Caco-2 (cell line): ENCODE measurements at regions of chr1 and their contacts with region 1.

Region 1: GRCh38 chr1:56986397-56986796 is 20.6 kb upstream of the C8B start:
- DNase-seq: no peak
- H3K4me3 ChIP-seq: no peak overlapping the region
- H3K4me3 Mint-ChIP-seq: no peak overlapping the region
- H3K27ac Mint-ChIP-seq: peak overlapping the region; percentile 67
- H3K4me1 ChIP-seq: peaks cover 25% of the 10 kb centered on the region
- H3K4me1 Mint-ChIP-seq: peaks cover 20% of the 10 kb centered on the region
- H3K27me3 ChIP-seq: no peaks in the 10 kb centered on the region
- H3K27me3 Mint-ChIP-seq: no peaks in the 10 kb centered on the region
- CTCF ChIP-seq: no peak

Region 2: DNA sequence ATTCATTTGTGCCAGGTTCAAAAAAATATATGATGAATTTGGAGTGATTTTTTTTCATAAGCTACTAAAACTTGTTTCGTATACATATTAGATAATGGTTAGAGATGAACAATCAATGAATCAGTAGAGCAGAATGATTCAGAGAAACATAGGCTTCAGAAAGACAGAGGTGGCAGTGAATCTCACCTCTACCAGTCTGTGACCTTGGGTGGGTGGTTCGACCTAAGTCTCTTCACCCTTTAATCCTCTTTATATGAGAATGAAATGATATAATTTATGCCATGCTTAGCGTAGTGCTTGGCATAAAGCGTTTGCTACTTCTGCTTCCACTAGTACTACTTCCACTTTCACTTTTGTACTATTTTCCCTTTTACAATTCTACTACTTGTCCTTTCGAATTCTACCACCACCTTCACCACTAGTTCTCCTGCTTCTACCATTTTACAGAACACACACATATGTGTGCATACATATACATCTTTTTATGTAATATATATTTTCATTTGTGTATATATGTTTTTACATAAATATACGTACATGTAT is 212.3 kb before region 1 on chr1:
- CTCF ChIA-PET with region 1: no interaction called
- POLR2A ChIA-PET with region 1: no interaction called
- intact Hi-C with region 1: no loop called
- DNase-seq: no peak
- H3K4me3 ChIP-seq: no peak overlapping the region
- H3K4me3 Mint-ChIP-seq: no peak overlapping the region
- H3K27ac Mint-ChIP-seq: no peak overlapping the region
- H3K4me1 ChIP-seq: no peaks in the 10 kb centered on the region
- H3K4me1 Mint-ChIP-seq: no peaks in the 10 kb centered on the region
- H3K27me3 ChIP-seq: no peaks in the 10 kb centered on the region
- H3K27me3 Mint-ChIP-seq: no peaks in the 10 kb centered on the region
- CTCF ChIP-seq: no peak

Region 3: GRCh38 chr1:57067863-57068262 is 81.5 kb after region 1 on chr1:
- CTCF ChIA-PET with region 1: no interaction called
- POLR2A ChIA-PET with region 1: interaction called, 3 read pairs
- intact Hi-C with region 1: loop called (anchors 1 kb)
- DNase-seq: no peak
- H3K4me3 ChIP-seq: no peak overlapping the region
- H3K4me3 Mint-ChIP-seq: no peak overlapping the region
- H3K27ac Mint-ChIP-seq: no peak overlapping the region
- H3K4me1 ChIP-seq: peaks cover 16% of the 10 kb centered on the region
- H3K4me1 Mint-ChIP-seq: no peaks in the 10 kb centered on the region
- H3K27me3 ChIP-seq: no peaks in the 10 kb centered on the region
- H3K27me3 Mint-ChIP-seq: no peaks in the 10 kb centered on the region
- CTCF ChIP-seq: no peak